ENCODE measurements at regions of chr3 and their contacts with region 1.

Region 1: GRCh38 chr3:87771341-87772192 is 287.2 kb downstream of the CGGBP1 start:
- DNase-seq: peak; percentile 25
- H3K4me3 ChIP-seq: no peak overlapping the region
- H3K27ac ChIP-seq: no peak overlapping the region
- H3K4me1 ChIP-seq: no peaks in the 10 kb centered on the region
- H3K27me3 ChIP-seq: no peaks in the 10 kb centered on the region
- CTCF ChIP-seq: peak; percentile 78 to 93

Region 2: GRCh38 chr3:87742250-87742649 is 29.3 kb before region 1 on chr3:
- CTCF ChIA-PET with region 1: no interaction called
- dilution Hi-C with region 1: no loop called
- in situ Hi-C with region 1: no loop called
- intact Hi-C with region 1: no loop called
- DNase-seq: no peak
- H3K4me3 ChIP-seq: no peak overlapping the region
- H3K27ac ChIP-seq: no peak overlapping the region
- H3K4me1 ChIP-seq: no peaks in the 10 kb centered on the region
- H3K27me3 ChIP-seq: no peaks in the 10 kb centered on the region
- CTCF ChIP-seq: no peak

Region 3: DNA sequence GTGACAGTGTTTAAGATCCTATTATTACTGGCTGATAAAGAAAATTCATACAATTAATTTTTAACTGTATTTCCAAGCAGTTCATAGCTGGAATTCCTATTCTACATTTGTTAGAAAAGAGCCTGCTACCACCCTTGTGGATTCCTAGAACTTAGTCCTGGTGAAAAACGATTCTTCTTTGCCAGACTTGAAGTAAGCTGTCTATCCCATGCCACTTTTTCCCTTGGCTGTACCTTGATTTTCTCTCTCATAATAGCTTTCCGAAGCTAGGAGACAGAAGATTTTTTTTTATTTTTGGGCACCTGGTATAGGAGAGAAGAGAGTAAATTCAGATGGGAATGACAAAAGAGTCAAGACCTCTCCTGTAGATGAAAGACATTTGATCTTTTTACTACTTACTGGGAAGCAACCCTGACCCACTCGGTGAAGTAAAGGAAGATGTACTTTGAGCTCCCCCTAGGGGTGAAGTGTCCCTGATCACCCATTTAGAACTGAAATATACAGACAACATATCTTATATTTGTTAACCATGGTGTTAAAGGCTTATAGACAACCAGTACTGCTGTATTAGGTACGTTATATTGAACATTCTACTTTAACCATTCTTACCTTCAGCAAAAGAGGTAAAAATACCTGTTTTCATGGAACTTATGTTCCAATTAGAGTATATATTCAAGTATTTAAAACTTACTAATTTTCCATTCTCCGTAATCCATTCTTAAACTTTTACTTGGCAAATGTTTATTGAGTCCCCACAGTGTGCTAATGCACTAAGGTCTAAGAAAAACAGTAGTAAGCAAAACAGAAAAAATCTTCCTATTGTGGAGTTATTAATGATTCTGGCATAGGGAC is 342.0 kb after region 1 on chr3:
- CTCF ChIA-PET with region 1: no interaction called
- dilution Hi-C with region 1: no loop called
- in situ Hi-C with region 1: no loop called
- intact Hi-C with region 1: loop called (anchors 5 kb)
- DNase-seq: peak; percentile 58
- H3K4me3 ChIP-seq: no peak overlapping the region
- H3K27ac ChIP-seq: no peak overlapping the region
- H3K4me1 ChIP-seq: no peaks in the 10 kb centered on the region
- H3K27me3 ChIP-seq: no peaks in the 10 kb centered on the region
- CTCF ChIP-seq: peak; percentile 69 to 71